Head of caudate nucleus (tissue), 42 donors: ENCODE measurements at regions of chr2 and their contacts with region 1.

Region 1: GRCh38 chr2:191013932-191014652 is at the start of gene STAT1:
- DNase-seq: peak; percentile 79 to 97 (median 94)

Region 2: DNA sequence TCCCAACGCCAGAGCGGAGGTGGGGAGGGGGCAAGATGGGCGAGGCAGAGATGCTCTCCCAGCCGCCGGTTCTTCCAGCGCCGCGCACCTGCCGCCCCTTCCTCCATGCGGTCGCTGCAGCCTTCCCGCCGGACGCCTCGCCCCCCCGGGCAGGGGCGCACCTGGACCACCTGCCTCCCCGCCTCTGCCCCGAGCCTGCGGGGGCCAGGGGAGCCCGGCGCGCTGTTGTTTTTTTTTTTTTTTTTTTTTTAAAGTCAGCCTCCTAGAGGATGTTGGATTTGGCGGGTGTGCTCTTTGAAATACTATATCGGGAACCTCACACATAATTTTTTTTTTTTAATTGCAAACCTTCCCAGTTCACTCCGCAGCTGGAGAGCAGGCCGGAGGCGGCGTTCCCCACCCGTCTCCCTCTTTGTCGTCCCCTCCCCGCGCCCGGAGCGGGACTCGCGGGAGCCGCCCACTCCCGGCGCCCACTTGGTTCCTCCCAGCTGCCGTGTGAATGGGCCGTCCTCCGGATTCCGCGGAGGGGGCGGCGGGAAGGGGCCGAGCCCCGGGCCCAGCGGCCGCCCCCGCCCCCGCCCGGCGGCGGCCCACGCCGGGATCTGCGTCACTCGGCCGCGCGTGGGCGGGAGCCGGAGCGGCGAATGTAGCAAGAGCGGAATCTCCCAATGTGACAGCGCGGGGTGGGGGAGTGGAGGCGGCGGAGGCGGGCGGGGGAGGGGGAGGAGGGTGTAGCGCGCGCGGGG is 365.6 kb before region 1 on chr2:
- intact Hi-C with region 1: loop called (anchors 5 kb)
- DNase-seq: peak; percentile 75 to 97 (median 92)

Region 3: DNA sequence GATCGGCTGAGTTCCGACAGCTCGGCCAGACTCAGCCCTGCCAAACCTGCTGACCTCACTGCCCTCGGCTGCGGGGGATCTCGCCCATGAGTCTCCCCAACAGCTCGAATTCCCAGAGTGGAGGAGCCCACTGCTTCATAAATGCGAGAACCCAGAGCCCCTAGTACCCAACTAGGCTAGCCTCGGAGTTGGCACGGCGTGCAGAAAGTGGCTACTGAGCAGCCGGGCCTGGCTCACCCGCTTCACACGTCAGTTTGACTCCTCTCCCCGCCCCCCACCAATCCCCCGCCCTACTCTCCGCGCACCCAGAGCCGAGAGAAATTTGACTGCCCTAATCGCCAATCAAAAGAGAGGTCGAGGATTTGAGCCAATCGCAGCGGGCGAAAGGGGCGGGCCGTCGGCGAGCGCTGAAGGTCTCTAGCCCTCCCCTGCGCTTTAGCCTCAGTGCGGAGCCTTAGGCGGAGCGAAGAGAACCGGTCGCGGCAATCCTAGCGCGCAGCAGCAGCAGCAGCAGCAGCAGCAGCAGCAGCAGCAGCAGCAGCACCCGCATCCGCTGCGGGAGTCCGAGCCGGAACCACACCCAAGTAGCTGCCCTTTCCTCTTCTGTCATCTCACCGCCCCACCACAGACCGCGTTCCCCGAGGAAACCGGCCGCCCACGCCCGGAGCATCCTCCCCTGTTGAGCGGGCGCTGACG is 133.6 kb before region 1 on chr2 and contains the start of gene GLS:
- intact Hi-C with region 1: loop called (anchors 2 kb)
- DNase-seq: peak; percentile 94 to 99 (median 98)